Ascending aorta (tissue), 2 donors: ENCODE measurements at regions of chr7 and their contacts with region 1.

Region 1: GRCh38 chr7:139230774-139231512 is at the start of gene UBN2:
- DNase-seq: peak; percentile 86 to 98
- H3K4me3 ChIP-seq: peak within 1 kb of the TSS; percentile 88 to 96
- H3K27ac ChIP-seq: peak within 1 kb of the TSS; percentile 95 to 96
- H3K4me1 ChIP-seq: peaks cover 3 to 13% of the 10 kb centered on the region in 2 donors
- H3K27me3 ChIP-seq: no peaks in the 10 kb centered on the region
- CTCF ChIP-seq: no peak
- total RNA-seq, gene UBN2: 3.7 TPM

Region 2: GRCh38 chr7:138459413-138460175 is 771.3 kb before region 1 on chr7:
- intact Hi-C with region 1: loop called (anchors 2 kb)
- DNase-seq: peak; percentile 93 to 99
- H3K4me3 ChIP-seq: peak overlapping the region; percentile 57 to 85
- H3K27ac ChIP-seq: no peak overlapping the region
- H3K4me1 ChIP-seq: peaks cover 3 to 5% of the 10 kb centered on the region in 2 donors
- H3K27me3 ChIP-seq: no peaks in the 10 kb centered on the region
- CTCF ChIP-seq: peak in 1 of 3 experiments; percentile 19

Region 3: DNA sequence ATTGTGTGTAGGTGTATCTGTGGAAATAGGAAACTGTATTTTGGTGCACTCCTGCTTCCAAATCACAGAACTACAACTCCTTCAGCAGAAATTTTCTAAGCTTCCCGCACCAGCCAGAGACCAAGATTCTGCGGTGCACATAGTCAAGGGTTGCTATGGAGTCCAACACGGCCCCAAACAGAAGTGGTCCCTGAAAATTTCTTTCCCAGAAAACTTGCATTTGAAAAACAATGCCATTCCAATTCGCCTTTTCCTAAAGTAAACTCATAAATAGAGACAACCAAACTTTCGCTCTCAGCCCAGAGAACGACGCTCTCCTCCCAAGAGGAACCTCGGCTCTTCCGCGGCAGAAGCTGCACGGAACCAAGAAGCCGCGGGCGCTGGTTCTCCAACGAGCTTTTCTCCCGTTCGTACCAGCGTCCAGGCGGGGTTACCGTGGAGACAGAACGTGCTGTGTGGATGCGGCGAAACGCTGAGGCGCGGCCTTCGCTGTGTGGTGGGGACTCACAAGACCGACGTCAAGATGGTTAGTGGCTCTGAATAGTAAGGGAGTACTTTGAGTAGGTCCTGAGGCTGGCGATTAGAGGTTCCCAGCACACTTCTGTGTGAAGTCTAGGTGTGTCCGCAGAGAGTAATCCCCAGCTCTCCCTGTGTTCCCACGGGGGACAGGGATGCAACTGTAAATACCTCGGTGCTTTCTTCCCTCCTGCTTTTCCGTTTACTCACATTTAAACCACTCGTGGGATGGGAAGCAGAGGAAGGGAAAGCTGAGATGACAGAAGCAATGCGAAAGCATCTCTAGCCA is 97.4 kb before region 1 on chr7:
- intact Hi-C with region 1: loop called (anchors 2 kb)
- DNase-seq: peak; percentile 48 to 93
- H3K4me3 ChIP-seq: peak overlapping the region; percentile 62 to 63
- H3K27ac ChIP-seq: peak overlapping the region; percentile 6 to 58
- H3K4me1 ChIP-seq: peaks cover 2 to 5% of the 10 kb centered on the region in 2 donors
- H3K27me3 ChIP-seq: no peaks in the 10 kb centered on the region
- CTCF ChIP-seq: no peak

Region 4: GRCh38 chr7:139777948-139778841 is 547.3 kb after region 1 on chr7 and contains the start of gene HIPK2:
- intact Hi-C with region 1: no loop called
- DNase-seq: peak; percentile 38 to 90
- H3K4me3 ChIP-seq: peak within 1 kb of the TSS; percentile 78 to 94
- H3K27ac ChIP-seq: peak within 1 kb of the TSS; percentile 94 to 96
- H3K4me1 ChIP-seq: peaks cover 0 to 27% of the 10 kb centered on the region in 2 donors
- H3K27me3 ChIP-seq: no peaks in the 10 kb centered on the region
- CTCF ChIP-seq: no peak
- total RNA-seq, gene HIPK2: 53.9 TPM